WTC11 (cell line): ENCODE measurements at regions of chr6 and their contacts with region 1.

Region 1: DNA sequence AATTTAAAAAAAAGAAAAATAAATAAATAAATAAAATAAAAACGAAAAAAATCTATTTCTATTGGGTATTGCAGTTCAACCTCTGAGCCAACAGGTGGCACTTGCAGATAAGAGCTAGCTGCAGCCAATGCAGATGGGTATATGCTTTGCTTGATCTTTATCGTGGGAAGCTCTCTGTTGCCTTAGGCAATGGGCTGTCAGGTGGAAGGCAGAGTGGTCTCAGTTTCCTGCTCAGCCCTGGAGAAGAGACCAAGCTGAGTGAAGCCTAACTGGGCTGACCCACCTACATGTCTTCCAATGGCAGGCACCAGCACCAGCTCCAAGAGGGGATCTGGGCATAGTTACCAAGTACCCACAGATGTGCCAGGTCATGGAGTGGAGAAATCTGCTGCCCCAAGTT is 95.0 kb downstream of the AK9 start:
- DNase-seq: peak; percentile 20
- ATAC-seq: peak; percentile 83
- H3K4me3 Mint-ChIP-seq: no peak overlapping the region
- H3K27ac Mint-ChIP-seq: no peak overlapping the region
- H3K4me1 Mint-ChIP-seq: no peaks in the 10 kb centered on the region
- H3K27me3 Mint-ChIP-seq: peaks cover under 1% of the 10 kb centered on the region
- CTCF ChIP-seq: peak; percentile 31

Region 2: DNA sequence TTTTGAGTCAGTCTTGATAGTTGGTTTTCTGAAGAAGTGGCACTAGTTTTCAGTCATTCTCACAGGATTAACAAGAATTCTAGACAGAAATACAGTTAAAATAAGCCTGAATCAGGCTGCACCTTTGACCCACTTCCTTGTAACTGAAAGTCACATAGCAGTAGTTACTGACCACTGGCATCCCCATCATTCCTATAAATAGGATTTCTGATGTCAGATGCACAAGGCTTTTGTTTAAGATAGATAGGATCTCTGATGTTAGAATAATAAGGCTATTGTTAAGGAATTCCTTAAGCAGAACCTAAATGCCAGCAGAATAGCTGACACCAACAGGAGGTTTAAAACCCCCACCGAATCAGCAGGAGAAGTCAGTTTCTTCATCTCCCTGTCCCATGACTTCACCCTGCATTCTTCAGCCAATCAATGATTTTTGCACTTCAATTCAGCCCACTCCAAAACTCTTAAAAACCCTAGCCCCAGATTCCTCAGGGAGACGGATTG is 82.4 kb before region 1 on chr6:
- CTCF ChIA-PET with region 1: no interaction called
- POLR2A ChIA-PET with region 1: no interaction called
- DNase-seq: no peak
- ATAC-seq: peak; percentile 88
- H3K4me3 Mint-ChIP-seq: peak overlapping the region; percentile 2; the same call in 1 of the 2 replicates
- H3K27ac Mint-ChIP-seq: peak overlapping the region; percentile 91
- H3K4me1 Mint-ChIP-seq: peaks cover 30% of the 10 kb centered on the region
- H3K27me3 Mint-ChIP-seq: no peaks in the 10 kb centered on the region; the same call in 1 of the 2 replicates
- CTCF ChIP-seq: no peak

Region 3: DNA sequence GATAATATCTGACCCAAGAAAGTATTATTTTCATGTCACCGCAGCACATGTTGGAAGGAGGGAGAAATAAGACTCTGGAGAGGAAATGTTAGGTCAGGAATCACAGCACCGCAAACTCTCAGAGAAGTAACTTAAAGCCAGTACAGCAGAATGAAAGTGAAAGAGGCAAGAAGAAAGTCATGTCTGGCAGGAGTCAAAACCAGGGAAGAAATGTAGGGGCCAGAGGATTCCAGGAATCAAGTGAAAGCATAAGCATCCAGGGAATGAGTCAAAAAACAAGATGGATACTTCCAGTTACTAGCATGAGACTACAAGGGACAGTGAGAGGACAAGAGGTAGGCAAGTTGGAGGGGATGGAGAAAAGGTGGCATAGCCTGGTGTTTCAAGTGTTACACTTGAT is 14.6 kb after region 1 on chr6:
- CTCF ChIA-PET with region 1: interaction called, 11 read pairs
- POLR2A ChIA-PET with region 1: no interaction called
- DNase-seq: no peak
- ATAC-seq: no peak
- H3K4me3 Mint-ChIP-seq: no peak overlapping the region
- H3K27ac Mint-ChIP-seq: no peak overlapping the region
- H3K4me1 Mint-ChIP-seq: no peaks in the 10 kb centered on the region
- H3K27me3 Mint-ChIP-seq: no peaks in the 10 kb centered on the region
- CTCF ChIP-seq: no peak

Region 4: GRCh38 chr6:109705258-109705657 is 109.3 kb after region 1 on chr6:
- CTCF ChIA-PET with region 1: interaction called, 10 read pairs
- POLR2A ChIA-PET with region 1: no interaction called
- DNase-seq: peak; percentile 81
- ATAC-seq: peak; percentile 91
- H3K4me3 Mint-ChIP-seq: no peak overlapping the region
- H3K27ac Mint-ChIP-seq: peak overlapping the region; percentile 35; the same call in 1 of the 2 replicates
- H3K4me1 Mint-ChIP-seq: peaks cover 41% of the 10 kb centered on the region
- H3K27me3 Mint-ChIP-seq: no peaks in the 10 kb centered on the region
- CTCF ChIP-seq: peak; percentile 87